ENCODE measurements at regions of chr17 and their contacts with region 1.

Region 1: DNA sequence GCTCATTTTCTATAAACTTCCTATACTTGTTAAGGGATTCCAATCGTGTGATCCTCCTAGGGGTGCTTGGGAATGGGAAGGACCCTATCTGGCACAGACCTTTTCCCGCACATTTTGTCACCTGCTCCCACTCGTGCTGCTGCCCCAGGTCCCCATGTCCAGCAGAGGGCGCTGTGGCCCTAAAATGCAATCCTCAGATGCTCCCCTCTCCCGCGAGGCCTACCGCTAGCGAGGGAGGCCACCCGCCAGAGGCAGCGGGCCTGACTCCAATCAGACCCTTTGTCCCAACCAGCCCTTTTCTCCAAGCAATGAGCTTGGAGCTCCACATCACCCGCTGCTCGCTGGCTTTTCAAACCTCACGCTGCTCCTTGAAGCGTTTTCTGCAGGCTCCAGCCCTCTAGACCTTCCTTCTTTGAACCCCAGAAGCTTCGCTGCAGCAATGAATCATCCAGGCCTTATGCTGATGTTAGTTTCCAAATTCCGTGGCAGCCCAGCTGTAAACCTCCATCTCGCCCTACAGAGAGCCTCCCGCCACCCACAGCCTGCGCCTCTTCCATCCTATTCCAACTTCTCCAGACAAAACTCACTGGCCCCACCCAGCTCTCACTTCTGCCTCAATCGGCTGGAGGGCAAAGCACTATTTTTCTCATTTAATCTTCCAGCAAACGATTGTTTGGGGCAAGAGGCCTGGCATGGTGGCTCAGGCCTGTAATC is 23.6 kb upstream of the FZD2 start:
- DNase-seq: peak; percentile 83 to 94 (median 89)
- ATAC-seq: peak; percentile 72 to 94 (median 93)
- H3K4me3 ChIP-seq: peak overlapping the region in 4 of 12 donors; percentile 14 to 43 (median 30)
- H3K27ac ChIP-seq: peak overlapping the region in 7 of 12 donors; percentile 6 to 62 (median 43)
- H3K4me1 ChIP-seq: peaks cover 0 to 26% (median 5%) of the 10 kb centered on the region in 12 donors
- H3K27me3 ChIP-seq: no peaks in the 10 kb centered on the region
- CTCF ChIP-seq: peak; percentile 83 to 96 (median 92)
- POLR2A ChIP-seq: no peak

Region 2: DNA sequence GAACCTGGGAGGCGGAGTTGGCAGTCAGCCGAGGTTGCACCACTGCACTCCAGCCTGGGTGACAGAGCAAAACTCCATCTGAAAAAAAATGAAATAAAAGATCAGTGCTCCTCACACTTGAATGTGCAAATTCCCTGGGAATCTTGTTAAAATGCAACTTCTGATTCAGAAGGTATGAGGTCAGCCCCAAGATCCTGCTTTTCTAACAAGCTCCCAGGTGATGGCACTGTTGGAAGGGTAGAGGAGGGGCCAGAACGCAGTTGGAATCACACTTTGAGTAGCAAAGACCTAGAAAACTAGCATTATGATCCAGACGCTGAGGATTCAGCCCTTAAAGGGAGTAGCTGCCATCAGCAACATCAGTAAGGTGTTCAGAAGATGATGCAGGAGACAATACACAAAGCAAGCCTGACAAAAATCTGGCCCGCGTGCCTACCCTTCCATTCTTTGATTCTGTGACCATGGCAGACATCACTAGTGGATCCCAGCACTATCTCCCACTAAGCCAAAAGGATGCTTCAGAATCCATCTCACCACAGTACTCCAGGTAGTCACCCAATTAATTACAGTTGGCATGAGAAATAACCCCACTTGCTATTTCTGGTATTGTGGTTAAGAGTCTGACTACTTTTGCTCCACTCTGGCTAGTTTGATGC is 89.5 kb after region 1 on chr17:
- intact Hi-C with region 1: loop called in 1 of 10 experiments (anchors 5 kb)
- DNase-seq: no peak
- ATAC-seq: no peak
- H3K4me3 ChIP-seq: no peak overlapping the region
- H3K27ac ChIP-seq: no peak overlapping the region
- H3K4me1 ChIP-seq: peaks cover 0 to 7% (median 0%) of the 10 kb centered on the region in 12 donors
- H3K27me3 ChIP-seq: peaks cover 0 to 3% (median 0%) of the 10 kb centered on the region in 9 donors
- CTCF ChIP-seq: no peak
- POLR2A ChIP-seq: no peak

Region 3: DNA sequence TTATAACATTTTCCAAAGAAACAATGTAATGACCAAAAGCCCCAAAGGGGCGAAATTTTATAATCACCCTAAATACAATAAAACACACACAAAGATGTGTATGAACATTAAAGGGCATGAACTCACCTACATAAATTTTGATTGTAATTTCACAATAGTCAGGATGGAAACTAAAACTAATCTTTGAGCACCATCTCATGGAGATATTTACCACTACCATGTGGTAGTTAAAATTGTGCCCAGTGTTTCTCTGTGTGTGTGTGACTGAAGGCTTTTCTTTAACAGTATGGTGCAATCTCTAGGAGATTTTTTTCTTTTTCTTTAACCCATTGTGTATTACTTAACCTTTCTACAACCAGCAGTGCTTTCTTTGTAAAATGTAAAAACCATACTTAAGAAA is 102.9 kb after region 1 on chr17:
- intact Hi-C with region 1: loop called (anchors 1 to 5 kb)
- DNase-seq: no peak
- ATAC-seq: peak in 3 of 4 donors; percentile 58 to 71 (median 70)
- H3K4me3 ChIP-seq: no peak overlapping the region
- H3K27ac ChIP-seq: no peak overlapping the region
- H3K4me1 ChIP-seq: no peaks in the 10 kb centered on the region
- H3K27me3 ChIP-seq: no peaks in the 10 kb centered on the region
- CTCF ChIP-seq: peak in 11 of 12 donors; percentile 22 to 66 (median 46)
- POLR2A ChIP-seq: no peak

Region 4: DNA sequence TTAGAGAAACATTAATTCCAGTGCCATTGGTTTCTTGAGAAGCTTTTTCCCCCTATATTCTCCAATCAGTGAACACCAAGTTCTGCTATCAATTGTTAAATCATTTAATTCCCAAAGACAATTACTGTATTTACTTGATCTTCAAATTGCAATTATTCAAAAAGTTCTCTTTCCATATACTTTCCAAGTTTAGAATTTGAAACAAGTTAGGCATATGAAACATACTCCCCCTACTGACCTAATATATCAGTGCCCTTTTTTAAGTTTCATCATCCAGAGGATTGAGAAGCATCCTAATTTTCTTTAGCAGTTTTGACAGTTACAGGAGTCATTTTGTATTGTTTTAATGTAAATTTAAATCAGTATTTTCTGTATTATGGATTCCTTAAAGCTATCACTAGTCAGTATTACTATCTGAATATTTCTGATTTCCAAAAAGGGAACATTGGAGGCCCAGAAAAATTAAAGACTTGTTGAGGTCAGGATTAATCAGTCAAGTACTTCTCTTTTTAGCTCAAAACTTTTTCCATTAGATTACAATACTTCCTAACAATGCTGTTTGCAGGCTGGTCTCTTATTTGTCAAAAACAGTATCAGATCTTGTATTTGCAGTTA is 138.9 kb after region 1 on chr17:
- intact Hi-C with region 1: loop called in 1 of 10 experiments (anchors 2 kb)
- DNase-seq: no peak
- ATAC-seq: no peak
- H3K4me3 ChIP-seq: no peak overlapping the region
- H3K27ac ChIP-seq: no peak overlapping the region
- H3K4me1 ChIP-seq: no peaks in the 10 kb centered on the region
- H3K27me3 ChIP-seq: no peaks in the 10 kb centered on the region
- CTCF ChIP-seq: peak; percentile 11 to 63 (median 51)
- POLR2A ChIP-seq: no peak

Region 5: GRCh38 chr17:44947461-44948314 is 414.0 kb after region 1 on chr17 and contains the start of gene KIF18B:
- intact Hi-C with region 1: no loop called
- DNase-seq: peak; percentile 89 to 91 (median 90)
- ATAC-seq: peak; percentile 93 to 100 (median 100)
- H3K4me3 ChIP-seq: peak within 1 kb of the TSS; percentile 22 to 80 (median 59)
- H3K27ac ChIP-seq: peak within 1 kb of the TSS in 10 of 12 donors; percentile 19 to 73 (median 62)
- H3K4me1 ChIP-seq: peaks cover 0 to 22% (median 9%) of the 10 kb centered on the region in 12 donors
- H3K27me3 ChIP-seq: no peaks in the 10 kb centered on the region
- CTCF ChIP-seq: no peak
- POLR2A ChIP-seq: peak in 1 of 2 donors; percentile 88
- total RNA-seq, gene KIF18B: 0.06 to 5.4 (median 0.44) TPM in 8 of 9 donors, not detected in the other